Naive thymus-derived CD4-positive, alpha-beta T cell (primary cell): ENCODE measurements at regions of chr1 and their contacts with region 1.

Region 1: GRCh38 chr1:12386130-12386529 is 156.3 kb downstream of the VPS13D start:
- DNase-seq: peak in 7 of 9 donors; percentile 23 to 55 (median 42)
- ATAC-seq: peak; percentile 95
- H3K4me3 ChIP-seq: peak overlapping the region; percentile 2
- H3K4me3 Mint-ChIP-seq: peak overlapping the region; percentile 30 to 81 (median 64)
- H3K27ac ChIP-seq: peak overlapping the region; percentile 52
- H3K27ac Mint-ChIP-seq: peak overlapping the region; percentile 61 to 96 (median 80)
- H3K4me1 ChIP-seq: peaks cover 31 to 40% of the 10 kb centered on the region in 2 donors
- H3K4me1 Mint-ChIP-seq: peaks cover 32 to 61% (median 52%) of the 10 kb centered on the region in 7 donors
- H3K27me3 ChIP-seq: no peaks in the 10 kb centered on the region
- H3K27me3 Mint-ChIP-seq: no peaks in the 10 kb centered on the region

Region 2: DNA sequence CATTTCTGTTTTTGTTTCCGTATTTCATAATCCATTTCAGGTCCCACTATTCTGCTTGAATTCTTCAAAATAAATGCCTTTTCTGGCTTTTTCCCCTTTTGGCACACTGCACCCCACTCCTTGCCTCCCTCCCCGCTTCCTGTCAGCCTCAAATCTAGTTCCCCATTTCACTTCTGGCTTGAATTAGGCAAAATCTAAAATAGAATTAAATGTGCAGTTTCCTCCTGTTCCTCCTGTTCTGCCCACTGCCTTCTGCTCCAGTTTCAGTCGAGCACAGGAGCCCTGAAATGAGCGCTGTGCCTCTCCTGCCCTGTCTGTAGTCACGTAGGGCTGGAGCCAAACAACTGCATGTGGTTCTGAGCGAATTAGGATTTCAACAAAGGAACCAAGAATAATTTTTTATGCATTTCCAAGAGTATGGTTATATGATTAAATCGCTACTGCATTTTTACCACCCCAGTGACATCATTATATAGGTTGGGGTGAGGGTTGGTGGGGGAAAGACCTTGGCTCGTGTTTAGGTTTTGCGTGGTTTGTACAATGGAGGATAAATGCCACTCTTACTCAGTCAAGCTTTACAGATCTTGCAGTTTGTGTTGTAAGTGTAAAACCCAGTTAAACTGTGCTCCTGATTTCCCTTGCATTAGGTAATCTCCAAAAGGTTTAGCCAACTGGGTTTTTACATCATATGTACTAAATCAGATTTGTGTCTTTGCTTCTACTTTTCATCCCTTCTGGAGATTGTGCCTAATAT is 41.4 kb before region 1 on chr1:
- CTCF ChIA-PET with region 1: no interaction called
- POLR2A ChIA-PET with region 1: interaction called, 3 read pairs
- intact Hi-C with region 1: loop called in 1 of 2 experiments (anchors 2 kb)
- DNase-seq: peak in 6 of 9 donors; percentile 1 to 31 (median 8)
- ATAC-seq: peak; percentile 56
- H3K4me3 ChIP-seq: peak overlapping the region; percentile 22
- H3K4me3 Mint-ChIP-seq: peak overlapping the region; percentile 72 to 87 (median 82)
- H3K27ac ChIP-seq: peak overlapping the region; percentile 64
- H3K27ac Mint-ChIP-seq: peak overlapping the region; percentile 90 to 98 (median 95)
- H3K4me1 ChIP-seq: peaks cover 17 to 38% of the 10 kb centered on the region in 2 donors
- H3K4me1 Mint-ChIP-seq: peaks cover 46 to 64% (median 63%) of the 10 kb centered on the region in 7 donors
- H3K27me3 ChIP-seq: no peaks in the 10 kb centered on the region
- H3K27me3 Mint-ChIP-seq: no peaks in the 10 kb centered on the region

Region 3: DNA sequence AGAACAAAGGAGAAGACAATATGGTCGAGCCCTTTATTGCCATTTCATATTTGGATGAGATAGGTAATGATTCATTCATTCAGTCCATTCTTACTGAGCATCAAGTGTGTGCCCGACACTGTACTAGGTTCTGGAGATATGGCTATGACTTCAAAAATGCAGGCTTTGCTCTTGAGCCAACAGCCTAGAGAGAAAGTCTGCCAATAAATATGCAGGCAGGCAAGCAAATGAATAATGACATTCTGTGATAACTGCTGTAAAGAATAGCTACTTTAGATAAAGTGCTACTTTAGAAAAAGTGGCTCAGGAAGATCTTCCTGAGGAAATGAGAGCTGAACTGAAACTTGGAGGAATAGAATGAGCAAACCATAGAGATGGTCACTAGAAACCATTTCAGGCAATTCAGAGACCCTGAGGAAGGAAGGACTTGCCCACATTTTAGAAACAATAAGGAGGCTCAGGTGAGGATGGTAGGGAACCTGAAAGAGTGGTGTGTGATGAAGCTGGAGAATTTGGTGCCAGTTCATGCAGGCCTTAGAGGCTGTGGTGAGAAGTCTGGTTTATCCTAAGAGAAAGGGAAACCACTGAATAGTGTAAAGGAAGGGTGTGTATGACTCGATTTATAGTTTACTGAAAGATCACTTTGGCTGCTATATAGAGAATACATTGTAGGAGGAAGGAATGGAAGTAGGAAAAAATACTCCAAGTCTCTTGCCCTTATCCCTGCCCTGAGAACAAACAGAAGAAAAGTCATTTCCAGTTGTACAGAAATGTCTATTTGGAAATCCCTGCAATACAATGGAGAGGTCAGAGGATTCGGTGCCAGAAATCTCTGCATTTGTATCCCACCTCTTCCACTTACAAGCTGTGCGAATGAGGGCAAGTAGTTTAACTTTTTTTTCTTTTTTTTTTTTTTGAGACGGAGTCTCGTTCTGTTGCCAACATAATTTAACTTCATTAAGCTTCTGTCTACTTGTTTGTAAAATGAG is 11.6 kb after region 1 on chr1:
- CTCF ChIA-PET with region 1: interaction called, 4 read pairs
- POLR2A ChIA-PET with region 1: interaction called, 4 read pairs
- intact Hi-C with region 1: loop called in 1 of 2 experiments (anchors 2 kb)
- DNase-seq: no peak
- ATAC-seq: no peak
- H3K4me3 ChIP-seq: no peak overlapping the region
- H3K4me3 Mint-ChIP-seq: peak overlapping the region in 5 of 10 donors; percentile 0 to 51 (median 11)
- H3K27ac ChIP-seq: no peak overlapping the region
- H3K27ac Mint-ChIP-seq: peak overlapping the region; percentile 4 to 81 (median 46)
- H3K4me1 ChIP-seq: peaks cover 0 to 16% of the 10 kb centered on the region in 2 donors
- H3K4me1 Mint-ChIP-seq: peaks cover 13 to 30% (median 23%) of the 10 kb centered on the region in 7 donors
- H3K27me3 ChIP-seq: no peaks in the 10 kb centered on the region
- H3K27me3 Mint-ChIP-seq: no peaks in the 10 kb centered on the region

Region 4: DNA sequence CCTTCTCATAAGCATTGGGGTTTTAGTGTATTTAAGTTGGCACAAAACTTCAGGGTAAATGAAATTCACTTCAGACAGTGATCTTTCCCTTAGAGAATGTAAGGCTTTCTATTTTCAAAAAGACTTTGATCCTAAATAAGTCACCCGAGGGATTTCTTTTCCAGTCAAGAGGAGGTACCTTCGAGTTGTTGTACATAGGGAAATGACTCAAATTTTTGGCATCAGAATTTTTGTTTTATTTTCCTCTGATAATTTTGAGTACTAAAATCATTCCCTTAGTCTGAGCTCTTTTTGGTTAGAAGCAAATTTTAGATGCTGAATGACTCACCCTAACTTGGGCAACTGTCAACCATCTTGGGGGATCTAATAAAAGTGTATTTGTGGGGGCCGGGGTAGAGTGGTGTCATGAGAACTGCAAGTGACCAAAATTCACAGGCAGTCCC is 38.0 kb after region 1 on chr1:
- CTCF ChIA-PET with region 1: no interaction called
- POLR2A ChIA-PET with region 1: no interaction called
- intact Hi-C with region 1: loop called in 1 of 2 experiments (anchors 5 kb)
- DNase-seq: no peak
- ATAC-seq: no peak
- H3K4me3 ChIP-seq: no peak overlapping the region
- H3K4me3 Mint-ChIP-seq: no peak overlapping the region
- H3K27ac ChIP-seq: no peak overlapping the region
- H3K27ac Mint-ChIP-seq: peak overlapping the region in 2 of 9 donors; percentile 43 to 57
- H3K4me1 ChIP-seq: peaks cover 0 to 4% of the 10 kb centered on the region in 2 donors
- H3K4me1 Mint-ChIP-seq: peaks cover 14 to 45% (median 31%) of the 10 kb centered on the region in 7 donors
- H3K27me3 ChIP-seq: no peaks in the 10 kb centered on the region
- H3K27me3 Mint-ChIP-seq: no peaks in the 10 kb centered on the region

Region 5: DNA sequence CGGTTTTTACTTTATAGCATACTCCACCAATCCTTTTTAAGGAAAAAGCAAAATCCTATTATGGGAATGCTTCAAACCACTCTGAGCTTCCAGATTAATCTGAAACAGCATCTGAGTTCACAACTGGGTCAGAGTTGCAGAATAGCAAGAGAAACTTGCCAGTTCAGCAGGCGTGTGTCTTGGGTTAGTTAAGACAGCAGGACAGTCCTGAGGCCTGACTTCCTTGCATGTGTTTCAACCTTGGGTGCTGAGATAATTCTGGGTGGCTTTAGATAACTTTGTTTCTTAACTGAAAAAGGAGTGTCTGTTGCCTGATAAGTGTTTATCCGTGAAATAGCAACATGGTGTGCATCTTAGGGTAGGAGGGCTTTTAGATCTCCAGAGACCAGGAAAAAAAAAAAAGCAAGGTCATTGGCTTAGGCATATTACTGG is 62.6 kb after region 1 on chr1:
- CTCF ChIA-PET with region 1: no interaction called
- POLR2A ChIA-PET with region 1: interaction called, 5 read pairs
- intact Hi-C with region 1: loop called in 1 of 2 experiments (anchors 1 kb)
- DNase-seq: no peak
- ATAC-seq: no peak
- H3K4me3 ChIP-seq: peak overlapping the region; percentile 9
- H3K4me3 Mint-ChIP-seq: peak overlapping the region; percentile 78 to 94 (median 86)
- H3K27ac ChIP-seq: peak overlapping the region; percentile 59
- H3K27ac Mint-ChIP-seq: peak overlapping the region; percentile 76 to 98 (median 94)
- H3K4me1 ChIP-seq: peaks cover 29 to 74% of the 10 kb centered on the region in 2 donors
- H3K4me1 Mint-ChIP-seq: peaks cover 44 to 98% (median 86%) of the 10 kb centered on the region in 7 donors
- H3K27me3 ChIP-seq: no peaks in the 10 kb centered on the region
- H3K27me3 Mint-ChIP-seq: peaks cover 0 to 31% (median 0%) of the 10 kb centered on the region in 5 donors

Region 6: GRCh38 chr1:12511516-12512468 is 125.7 kb after region 1 on chr1:
- CTCF ChIA-PET with region 1: no interaction called
- POLR2A ChIA-PET with region 1: interaction called, 6 read pairs
- intact Hi-C with region 1: loop called (anchors 1 to 2 kb)
- DNase-seq: no peak
- ATAC-seq: no peak
- H3K4me3 ChIP-seq: peak overlapping the region; percentile 69
- H3K4me3 Mint-ChIP-seq: peak overlapping the region; percentile 79 to 97 (median 88)
- H3K27ac ChIP-seq: peak overlapping the region; percentile 75
- H3K27ac Mint-ChIP-seq: peak overlapping the region; percentile 94 to 100 (median 98)
- H3K4me1 ChIP-seq: peaks cover 26% of the 10 kb centered on the region in 2 donors
- H3K4me1 Mint-ChIP-seq: peaks cover 30 to 72% (median 59%) of the 10 kb centered on the region in 7 donors
- H3K27me3 ChIP-seq: no peaks in the 10 kb centered on the region
- H3K27me3 Mint-ChIP-seq: no peaks in the 10 kb centered on the region